IMR-90 (cell line): ENCODE measurements at regions of chr16 and their contacts with region 1.

Region 1: DNA sequence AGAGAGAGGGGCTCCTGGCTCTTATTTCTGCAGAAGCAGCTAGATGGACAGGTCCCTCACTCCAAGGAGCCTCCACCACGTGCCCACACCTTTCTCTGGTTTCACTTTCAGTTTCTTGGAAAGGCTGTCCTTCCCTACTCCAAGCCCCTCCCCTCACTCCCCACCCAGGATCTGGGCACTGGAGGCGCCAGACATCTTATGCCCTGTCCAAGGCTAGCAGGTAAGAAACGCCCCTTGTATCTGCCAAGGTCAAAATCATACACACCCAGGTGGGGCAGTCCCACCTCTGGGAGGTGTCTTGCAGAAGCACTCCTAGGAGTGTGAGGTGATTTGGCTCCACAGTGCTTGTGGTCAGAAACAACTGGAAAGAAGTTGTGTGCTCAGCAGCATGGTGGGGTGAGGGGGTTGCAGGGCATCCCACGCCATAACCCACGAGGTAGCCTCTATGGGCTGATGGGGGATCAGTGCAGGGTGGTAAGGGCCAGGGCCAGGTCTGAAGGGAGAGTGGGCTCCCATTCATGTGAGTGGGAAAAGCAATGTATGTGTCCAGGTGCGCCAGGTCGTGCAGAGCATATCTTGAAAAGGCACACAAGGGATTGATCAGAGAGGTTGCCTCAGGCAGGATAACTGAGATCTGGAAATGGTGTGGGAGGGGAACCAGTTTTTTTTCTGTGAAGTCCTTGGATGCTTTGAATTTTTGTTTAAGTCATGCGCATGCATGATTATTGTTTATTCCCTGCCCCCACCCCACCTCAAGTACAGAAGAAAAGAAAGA is 31.8 kb upstream of the PRM1 start:
- DNase-seq: peak; percentile 78
- ATAC-seq: peak; percentile 73
- H3K4me3 ChIP-seq: no peak overlapping the region
- H3K27ac ChIP-seq: peak overlapping the region; percentile 79
- H3K4me1 ChIP-seq: peaks cover 24% of the 10 kb centered on the region
- H3K27me3 ChIP-seq: no peaks in the 10 kb centered on the region
- CTCF ChIP-seq: no peak
- POLR2A ChIP-seq: no peak
- RAD21 ChIP-seq: no peak

Region 2: DNA sequence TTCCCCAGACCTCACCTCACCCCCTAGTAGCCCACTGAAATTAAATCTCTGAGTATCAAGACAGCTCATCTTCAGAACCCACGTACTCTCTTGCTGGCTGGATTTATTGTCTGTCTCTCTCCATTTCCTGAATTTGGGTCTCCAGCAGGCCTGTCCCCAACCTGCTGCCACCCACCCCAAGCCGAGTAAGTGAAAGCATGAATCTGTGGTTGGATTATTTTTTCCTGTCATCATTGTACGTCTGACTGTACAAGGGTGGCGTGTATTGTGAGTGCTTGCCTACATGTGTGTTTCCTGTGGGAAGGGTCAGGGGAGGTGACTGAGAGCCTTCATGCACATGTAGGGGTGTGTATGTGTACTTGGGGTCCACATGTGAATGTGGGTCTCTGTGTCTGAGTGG is 49.2 kb before region 1 on chr16:
- CTCF ChIA-PET with region 1: no interaction called
- POLR2A ChIA-PET with region 1: no interaction called
- dilution Hi-C with region 1: no loop called
- in situ Hi-C with region 1: loop called (anchors 5 kb)
- intact Hi-C with region 1: no loop called
- DNase-seq: no peak
- ATAC-seq: no peak
- H3K4me3 ChIP-seq: no peak overlapping the region
- H3K27ac ChIP-seq: no peak overlapping the region
- H3K4me1 ChIP-seq: peaks cover 4% of the 10 kb centered on the region; the same call in 1 of the 2 replicates
- H3K27me3 ChIP-seq: peaks cover 14% of the 10 kb centered on the region
- CTCF ChIP-seq: no peak
- POLR2A ChIP-seq: no peak
- RAD21 ChIP-seq: no peak

Region 3: DNA sequence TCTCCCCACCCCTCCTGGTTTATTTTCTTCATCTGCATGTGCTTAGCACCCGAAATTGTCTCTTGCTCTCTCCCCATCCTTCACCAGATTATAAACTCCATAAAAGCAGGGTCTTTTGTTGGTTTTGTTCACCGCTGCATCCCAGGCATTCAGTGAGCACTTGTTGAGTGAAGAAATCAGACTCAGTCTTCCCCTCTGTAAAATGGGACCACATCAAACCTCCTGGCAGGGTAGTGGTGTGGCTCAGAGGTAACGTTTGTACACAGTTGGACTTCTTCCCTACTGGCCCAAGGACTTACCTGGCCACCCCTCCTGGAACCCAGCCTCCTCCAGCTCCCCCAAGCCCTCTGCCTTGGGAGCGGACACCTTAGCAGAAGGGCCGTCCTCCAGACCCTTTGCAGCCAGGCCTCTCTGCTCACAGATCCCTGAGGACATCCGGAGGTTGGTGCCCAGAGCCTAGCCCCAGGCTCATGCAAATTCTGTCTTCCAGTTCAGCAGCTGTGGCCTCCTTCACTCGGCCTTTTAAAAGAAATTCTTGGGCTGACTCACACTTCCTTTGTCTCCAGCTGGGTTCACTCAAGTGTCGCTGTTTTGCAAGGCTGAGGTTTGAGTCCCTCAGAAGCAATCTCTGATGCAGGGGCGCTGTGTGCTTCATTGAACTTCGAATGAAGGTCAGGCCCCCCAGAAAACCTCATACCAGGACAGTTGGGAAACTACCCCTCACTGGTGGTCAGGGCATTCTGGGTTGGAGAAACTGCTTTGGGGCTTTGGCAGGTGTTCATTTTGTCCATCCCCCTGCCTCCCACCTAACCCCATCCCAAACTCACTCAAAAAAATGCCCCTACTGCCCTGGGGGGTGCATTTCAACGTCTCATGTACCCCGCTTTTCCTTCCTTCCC is 15.5 kb after region 1 on chr16:
- CTCF ChIA-PET with region 1: interaction called, 4 read pairs
- POLR2A ChIA-PET with region 1: no interaction called
- dilution Hi-C with region 1: no loop called
- in situ Hi-C with region 1: no loop called
- intact Hi-C with region 1: loop called (anchors 2 kb)
- DNase-seq: peak; percentile 97
- ATAC-seq: peak; percentile 88
- H3K4me3 ChIP-seq: peak overlapping the region; percentile 9; the same call in 1 of the 2 replicates
- H3K27ac ChIP-seq: peak overlapping the region; percentile 94
- H3K4me1 ChIP-seq: peaks cover 24% of the 10 kb centered on the region
- H3K27me3 ChIP-seq: no peaks in the 10 kb centered on the region
- CTCF ChIP-seq: no peak
- POLR2A ChIP-seq: no peak
- RAD21 ChIP-seq: no peak

Region 4: DNA sequence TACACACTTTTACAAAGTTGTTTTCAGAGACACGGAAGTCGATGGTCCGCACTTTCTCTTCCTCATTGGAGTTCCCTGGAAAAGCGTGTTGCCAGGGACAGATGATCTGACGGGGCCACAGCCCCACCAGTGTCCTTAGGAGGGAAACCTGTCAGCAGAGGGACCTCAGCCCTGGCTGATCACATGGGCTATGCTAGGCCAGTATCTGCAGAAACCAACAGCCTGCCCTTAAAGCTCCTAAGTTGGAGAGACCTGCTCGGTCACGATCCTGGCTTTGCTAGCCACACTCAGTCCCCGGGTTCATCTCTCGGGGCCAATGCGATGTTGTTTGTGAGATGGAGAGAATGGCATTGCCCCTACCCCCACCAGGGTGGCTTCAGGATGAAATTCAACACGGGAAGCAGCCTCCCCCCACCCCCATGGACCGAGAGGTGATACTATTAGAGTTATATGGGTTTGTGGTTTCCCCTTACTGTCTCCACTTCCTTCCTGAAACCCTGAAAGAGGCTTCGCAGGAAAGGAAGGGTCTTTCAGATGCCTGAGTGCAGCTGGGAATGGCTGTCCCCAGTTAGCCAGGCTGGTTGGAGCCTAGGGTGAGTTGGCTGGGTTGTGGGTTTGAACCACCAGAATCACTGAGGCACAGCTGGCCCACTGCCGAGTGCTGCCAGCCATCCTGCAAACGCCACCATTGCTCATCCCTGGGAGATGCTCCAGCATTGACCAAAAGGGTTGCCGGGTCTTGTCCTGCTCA is 49.0 kb after region 1 on chr16:
- CTCF ChIA-PET with region 1: no interaction called
- POLR2A ChIA-PET with region 1: no interaction called
- dilution Hi-C with region 1: no loop called
- in situ Hi-C with region 1: no loop called
- intact Hi-C with region 1: no loop called
- DNase-seq: no peak
- ATAC-seq: no peak
- H3K4me3 ChIP-seq: no peak overlapping the region
- H3K27ac ChIP-seq: peak overlapping the region; percentile 64; the same call in 1 of the 2 replicates
- H3K4me1 ChIP-seq: peaks cover 43% of the 10 kb centered on the region
- H3K27me3 ChIP-seq: no peaks in the 10 kb centered on the region
- CTCF ChIP-seq: no peak
- POLR2A ChIP-seq: no peak
- RAD21 ChIP-seq: no peak